ENCODE measurements at regions of chr20 and their contacts with region 1.

Region 1: GRCh38 chr20:15396900-15397299 is 1059.5 kb upstream of the FLRT3 start:
- DNase-seq: no peak
- H3K4me3 ChIP-seq: no peak overlapping the region
- H3K27ac ChIP-seq: no peak overlapping the region
- H3K4me1 ChIP-seq: no peaks in the 10 kb centered on the region
- H3K27me3 ChIP-seq: no peaks in the 10 kb centered on the region
- CTCF ChIP-seq: no peak

Region 2: GRCh38 chr20:15332711-15333160 is 64.2 kb before region 1 on chr20:
- CTCF ChIA-PET with region 1: no interaction called
- POLR2A ChIA-PET with region 1: no interaction called
- intact Hi-C with region 1: no loop called
- DNase-seq: no peak
- H3K4me3 ChIP-seq: no peak overlapping the region
- H3K27ac ChIP-seq: no peak overlapping the region
- H3K4me1 ChIP-seq: no peaks in the 10 kb centered on the region
- H3K27me3 ChIP-seq: no peaks in the 10 kb centered on the region
- CTCF ChIP-seq: no peak

Region 3: DNA sequence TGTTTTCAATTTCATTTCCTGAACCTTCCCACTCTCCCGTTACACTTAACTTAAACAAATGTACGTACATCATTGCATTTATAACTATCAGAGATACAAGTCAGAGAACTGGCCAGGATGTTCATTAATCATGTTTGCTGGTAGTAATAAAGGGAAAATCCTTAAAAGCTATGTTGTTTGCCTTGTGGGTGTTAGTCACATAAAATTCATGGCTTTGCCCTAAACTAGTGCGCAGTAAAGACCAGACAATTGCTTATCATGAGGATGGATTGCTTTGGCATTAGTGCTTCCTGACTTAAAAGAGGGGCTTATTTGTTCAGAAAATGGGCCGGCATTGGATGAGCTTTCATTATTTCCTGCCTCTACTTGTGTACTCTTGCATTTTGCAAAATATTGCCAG is 22.2 kb before region 1 on chr20:
- CTCF ChIA-PET with region 1: no interaction called
- POLR2A ChIA-PET with region 1: no interaction called
- intact Hi-C with region 1: no loop called
- DNase-seq: no peak
- H3K4me3 ChIP-seq: no peak overlapping the region
- H3K27ac ChIP-seq: no peak overlapping the region
- H3K4me1 ChIP-seq: no peaks in the 10 kb centered on the region
- H3K27me3 ChIP-seq: no peaks in the 10 kb centered on the region
- CTCF ChIP-seq: no peak

Region 4: GRCh38 chr20:15455279-15455678 is 58.4 kb after region 1 on chr20:
- CTCF ChIA-PET with region 1: no interaction called
- POLR2A ChIA-PET with region 1: no interaction called
- intact Hi-C with region 1: loop called (anchors 10 kb)
- DNase-seq: no peak
- H3K4me3 ChIP-seq: no peak overlapping the region
- H3K27ac ChIP-seq: no peak overlapping the region
- H3K4me1 ChIP-seq: no peaks in the 10 kb centered on the region
- H3K27me3 ChIP-seq: no peaks in the 10 kb centered on the region
- CTCF ChIP-seq: no peak